ENCODE measurements at regions of chr5 and their contacts with region 1.

Region 1: DNA sequence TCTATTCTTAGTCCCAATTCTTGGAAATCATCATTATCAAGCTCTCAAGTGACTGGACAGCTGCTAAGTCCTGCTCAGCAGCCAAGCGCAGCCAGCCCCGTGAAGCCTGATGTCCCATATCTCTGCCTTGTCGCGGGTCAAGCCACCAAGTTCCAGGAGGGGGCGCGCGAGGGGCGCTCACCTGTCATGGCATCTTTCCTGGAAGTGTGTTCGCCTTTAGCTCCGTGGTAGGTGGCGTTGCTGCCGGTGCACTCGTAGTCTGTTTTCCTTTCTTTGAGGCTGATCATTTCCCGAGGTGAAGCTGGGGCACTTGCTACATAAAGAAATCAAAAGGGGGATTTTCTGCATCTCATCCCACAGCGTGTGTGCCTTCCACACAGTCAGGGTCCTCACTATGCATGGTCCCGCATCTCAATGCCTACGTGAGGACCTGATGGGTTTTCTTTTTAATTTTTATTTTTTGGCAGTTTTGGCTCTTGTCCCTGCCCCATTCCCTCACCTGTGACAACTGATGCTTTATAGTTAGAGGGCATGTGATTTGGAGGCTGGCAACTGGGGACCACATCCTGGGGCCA is 227.0 kb upstream of the DAP start:
- DNase-seq: peak; percentile 35 to 56
- ATAC-seq: peak; percentile 82 to 95
- H3K4me3 ChIP-seq: no peak overlapping the region
- H3K27ac ChIP-seq: no peak overlapping the region
- H3K4me1 ChIP-seq: no peaks in the 10 kb centered on the region
- CTCF ChIP-seq: peak; percentile 51
- EP300 ChIP-seq: no peak
- POLR2A ChIP-seq: no peak
- RAD21 ChIP-seq: peak; percentile 49 to 72; a peak in 4 of 5 replicates

Region 2: DNA sequence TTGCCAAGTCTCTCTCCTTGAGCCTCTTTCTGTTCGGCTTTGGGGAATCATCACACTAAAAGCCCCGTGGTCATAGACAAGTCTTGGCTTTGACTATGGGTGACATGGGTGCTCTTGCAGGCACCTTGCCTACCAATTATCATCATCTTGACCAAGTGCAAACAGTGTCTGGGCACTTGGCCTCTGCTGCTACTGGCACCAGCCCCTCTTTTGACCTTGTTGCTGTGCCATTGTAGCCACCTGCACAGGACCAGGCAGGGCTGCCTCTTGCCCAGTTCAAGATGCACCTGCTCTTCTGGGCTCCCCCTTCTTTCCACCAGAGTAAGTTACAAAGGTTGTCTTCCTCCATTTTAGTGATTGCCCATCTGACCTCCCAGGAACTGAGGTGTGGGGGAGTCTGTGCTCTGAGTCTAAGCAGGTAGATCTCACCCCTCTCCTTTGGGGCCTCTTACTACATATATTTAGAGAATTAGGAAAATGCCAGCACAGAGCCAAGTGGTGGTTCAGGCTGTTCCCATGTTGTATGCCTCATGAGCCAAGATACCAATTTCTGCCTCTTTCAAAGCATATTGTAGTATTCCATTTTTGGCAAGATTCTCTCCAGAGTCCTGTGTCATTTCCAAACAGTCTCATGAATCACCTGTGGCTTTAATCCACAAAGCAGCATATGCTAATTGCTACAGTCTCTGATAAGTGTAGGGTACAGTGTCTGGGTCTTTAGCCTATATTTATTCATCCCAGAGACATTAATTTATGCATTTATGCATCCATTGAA is 84.0 kb before region 1 on chr5:
- CTCF ChIA-PET with region 1: no interaction called
- POLR2A ChIA-PET with region 1: no interaction called
- DNase-seq: no peak
- ATAC-seq: no peak
- H3K4me3 ChIP-seq: no peak overlapping the region
- H3K27ac ChIP-seq: no peak overlapping the region
- H3K4me1 ChIP-seq: no peaks in the 10 kb centered on the region
- CTCF ChIP-seq: no peak
- EP300 ChIP-seq: no peak
- POLR2A ChIP-seq: no peak
- RAD21 ChIP-seq: no peak

Region 3: GRCh38 chr5:10946050-10946449 is 42.0 kb before region 1 on chr5:
- CTCF ChIA-PET with region 1: no interaction called
- POLR2A ChIA-PET with region 1: no interaction called
- DNase-seq: no peak
- ATAC-seq: no peak
- H3K4me3 ChIP-seq: no peak overlapping the region
- H3K27ac ChIP-seq: no peak overlapping the region
- H3K4me1 ChIP-seq: no peaks in the 10 kb centered on the region
- CTCF ChIP-seq: no peak
- EP300 ChIP-seq: no peak
- POLR2A ChIP-seq: no peak
- RAD21 ChIP-seq: no peak

Region 4: GRCh38 chr5:10975945-10976344 is 12.1 kb before region 1 on chr5:
- CTCF ChIA-PET with region 1: interaction called, 19 read pairs
- POLR2A ChIA-PET with region 1: no interaction called
- DNase-seq: no peak
- ATAC-seq: no peak
- H3K4me3 ChIP-seq: no peak overlapping the region
- H3K27ac ChIP-seq: no peak overlapping the region
- H3K4me1 ChIP-seq: no peaks in the 10 kb centered on the region
- CTCF ChIP-seq: no peak
- EP300 ChIP-seq: no peak
- POLR2A ChIP-seq: no peak
- RAD21 ChIP-seq: no peak

Region 5: GRCh38 chr5:11289740-11290139 is 301.7 kb after region 1 on chr5:
- CTCF ChIA-PET with region 1: no interaction called
- POLR2A ChIA-PET with region 1: no interaction called
- DNase-seq: no peak
- ATAC-seq: no peak
- H3K4me3 ChIP-seq: no peak overlapping the region
- H3K27ac ChIP-seq: no peak overlapping the region
- H3K4me1 ChIP-seq: no peaks in the 10 kb centered on the region
- CTCF ChIP-seq: no peak
- EP300 ChIP-seq: no peak
- POLR2A ChIP-seq: no peak
- RAD21 ChIP-seq: no peak